ENCODE measurements at regions of chr14 and their contacts with region 1.

Region 1: DNA sequence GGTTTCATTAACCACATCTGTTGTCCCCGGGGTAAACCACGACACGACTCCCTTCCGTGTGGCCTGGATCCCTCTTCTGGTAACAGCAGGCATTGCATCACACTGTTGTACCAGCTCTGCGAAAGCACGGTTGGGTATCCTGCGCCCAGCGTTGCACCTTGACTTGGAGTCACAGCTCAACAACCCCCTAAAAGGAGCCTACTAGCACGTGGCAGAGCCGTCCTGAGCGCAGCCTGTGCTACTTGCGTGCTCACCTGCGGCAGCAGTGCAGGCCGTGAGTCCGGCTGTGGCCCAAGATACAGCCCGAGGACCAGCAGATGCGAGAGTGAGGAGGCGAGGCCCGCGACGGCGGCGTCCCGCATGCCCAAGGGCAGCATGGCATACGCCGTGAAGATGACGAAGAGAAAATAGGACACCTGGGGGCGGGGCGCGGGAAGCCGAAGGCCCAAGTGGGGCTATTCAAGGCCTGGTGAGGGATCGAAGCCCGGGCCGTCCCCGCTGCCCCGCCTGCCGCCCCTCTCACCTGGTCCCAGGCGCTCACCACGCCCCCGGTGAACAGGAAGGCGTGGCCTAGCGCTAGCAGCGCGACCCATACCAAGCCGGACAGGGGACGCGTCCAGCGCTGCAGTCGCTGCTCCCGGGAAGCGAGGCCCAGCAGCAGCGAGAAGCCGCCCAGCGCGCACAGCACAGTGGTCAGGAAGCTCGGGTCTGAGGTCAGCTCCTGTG is 2.4 kb downstream of the ADCY4 start:
- DNase-seq: peak; percentile 95
- H3K4me3 Mint-ChIP-seq: peak overlapping the region; percentile 87
- H3K27ac Mint-ChIP-seq: peak overlapping the region; percentile 26
- H3K4me1 Mint-ChIP-seq: peaks cover 51% of the 10 kb centered on the region
- H3K27me3 Mint-ChIP-seq: peaks cover 33% of the 10 kb centered on the region

Region 2: DNA sequence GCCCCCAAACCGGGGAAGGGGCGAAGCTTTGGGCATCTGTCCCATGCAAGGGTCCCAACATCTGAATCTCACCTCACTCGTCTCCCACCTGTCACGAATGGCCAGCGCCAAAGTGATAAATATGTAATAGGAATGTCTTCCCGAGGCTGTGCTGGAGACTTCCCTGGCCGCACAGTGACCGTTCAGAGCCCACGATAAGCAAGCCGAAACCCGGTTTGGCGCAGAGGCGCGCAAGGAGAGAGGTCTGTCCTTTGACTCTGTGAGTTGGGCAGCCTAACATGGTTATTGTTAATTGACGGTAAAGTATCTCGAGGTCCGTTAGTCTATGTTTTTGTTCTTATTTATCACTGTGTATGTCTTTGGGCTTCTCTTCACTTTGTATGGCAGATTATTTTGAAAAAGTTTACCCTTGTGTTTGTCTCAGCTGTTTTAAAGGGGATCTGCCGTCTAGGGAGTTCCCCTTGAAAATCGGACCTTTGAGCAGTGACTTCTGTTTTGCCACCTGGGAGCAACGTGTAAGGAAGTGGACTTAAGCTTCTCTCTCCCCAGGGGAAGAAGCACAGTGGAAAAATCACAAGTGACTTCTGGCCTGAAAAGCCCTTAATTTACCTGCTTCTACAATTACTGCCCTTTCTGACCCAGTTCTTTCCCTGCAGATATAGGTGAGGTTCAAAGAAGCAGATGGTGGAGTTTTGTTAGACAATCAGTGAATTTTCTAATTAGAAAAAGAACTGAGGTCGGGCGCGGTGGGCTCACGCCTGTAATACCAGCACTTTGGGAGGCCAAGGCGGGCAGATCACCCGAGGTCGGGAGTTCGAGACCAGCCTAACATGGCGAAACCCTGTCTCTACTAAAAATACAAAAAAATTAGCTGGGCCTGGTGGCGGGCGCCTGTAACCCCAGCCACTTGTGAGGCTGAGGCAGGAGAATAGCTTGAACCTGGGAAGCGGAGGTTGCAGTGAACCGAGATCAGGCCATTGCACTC is 136.1 kb before region 1 on chr14:
- intact Hi-C with region 1: no loop called
- DNase-seq: peak; percentile 60
- H3K4me3 Mint-ChIP-seq: peak overlapping the region; percentile 87
- H3K27ac Mint-ChIP-seq: peak overlapping the region; percentile 96
- H3K4me1 Mint-ChIP-seq: peaks cover 48% of the 10 kb centered on the region
- H3K27me3 Mint-ChIP-seq: no peaks in the 10 kb centered on the region

Region 3: GRCh38 chr14:24310646-24311604 is 21.5 kb before region 1 on chr14 and contains the start of gene LTB4R:
- intact Hi-C with region 1: loop called (anchors 2 kb)
- DNase-seq: peak; percentile 89
- H3K4me3 Mint-ChIP-seq: peak within 1 kb of the TSS; percentile 86
- H3K27ac Mint-ChIP-seq: peak within 1 kb of the TSS; percentile 91
- H3K4me1 Mint-ChIP-seq: peaks cover 68% of the 10 kb centered on the region
- H3K27me3 Mint-ChIP-seq: no peaks in the 10 kb centered on the region
- total RNA-seq, gene LTB4R: 12.2 and 14.2 TPM in 2 replicates

Measured in activated CD4-positive, alpha-beta T cell treated with anti-CD3 and anti-CD28 coated beads, Interleukin-2, amount 10 ng/mL, durations not matched to agents 24 days and 14 days (primary cell).